Cardiac septum (tissue), 1 donor: ENCODE measurements at regions of chr9 and their contacts with region 1.

Region 1: DNA sequence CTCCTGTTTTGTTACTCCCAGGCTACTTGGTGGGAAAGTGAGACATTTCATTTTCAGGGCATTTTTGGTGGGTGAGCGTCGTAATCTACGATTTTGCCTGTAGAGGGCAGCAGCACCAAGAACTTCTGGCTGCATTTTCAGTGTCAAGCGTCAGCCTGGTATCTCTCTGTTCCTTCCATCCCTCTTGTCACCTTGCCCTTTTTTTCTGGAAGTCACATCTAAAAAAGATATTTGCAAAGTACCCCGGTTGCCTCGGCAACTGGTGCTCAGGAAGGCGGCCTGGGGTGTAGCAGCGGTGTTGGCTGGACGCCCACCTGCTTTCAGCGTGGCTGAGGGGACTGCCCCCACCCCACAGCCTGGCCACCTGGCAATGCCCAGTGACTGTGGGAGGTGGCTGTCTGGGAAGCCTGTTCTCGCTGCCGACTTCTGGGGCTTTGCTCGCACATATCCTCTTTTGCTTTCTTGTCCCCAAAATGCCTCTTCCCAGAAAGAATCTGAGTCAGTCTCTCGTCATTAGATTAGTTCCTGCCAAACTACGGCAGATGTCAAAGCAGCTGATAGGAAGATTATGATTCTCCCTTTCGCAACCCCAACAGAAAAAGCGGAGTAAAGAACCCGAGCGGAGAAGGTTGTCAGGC is 84.5 kb downstream of the ACER2 start:
- DNase-seq: peak; percentile 82

Region 2: DNA sequence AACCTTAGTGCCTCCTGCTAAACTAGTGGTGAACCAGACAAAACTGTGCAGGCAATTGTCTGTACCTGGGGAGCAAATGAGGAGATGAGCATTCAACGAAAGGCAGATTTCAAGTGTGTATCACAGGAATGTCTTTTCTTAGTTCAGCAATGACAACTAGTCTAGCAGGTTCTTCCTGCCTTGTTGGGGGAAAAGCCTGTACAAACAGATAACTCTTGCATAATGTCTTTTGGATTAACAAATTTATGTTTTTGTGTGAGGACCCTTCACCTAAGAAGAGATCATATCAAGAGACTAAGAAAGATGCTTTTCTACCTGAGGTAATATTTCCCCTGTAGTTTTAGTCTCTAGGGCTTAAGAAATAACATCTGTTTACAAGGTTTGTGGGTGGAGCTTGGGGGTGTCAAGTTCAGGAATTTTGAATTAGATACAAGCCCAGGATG is 284.6 kb before region 1 on chr9:
- intact Hi-C with region 1: no loop called
- DNase-seq: no peak

Region 3: DNA sequence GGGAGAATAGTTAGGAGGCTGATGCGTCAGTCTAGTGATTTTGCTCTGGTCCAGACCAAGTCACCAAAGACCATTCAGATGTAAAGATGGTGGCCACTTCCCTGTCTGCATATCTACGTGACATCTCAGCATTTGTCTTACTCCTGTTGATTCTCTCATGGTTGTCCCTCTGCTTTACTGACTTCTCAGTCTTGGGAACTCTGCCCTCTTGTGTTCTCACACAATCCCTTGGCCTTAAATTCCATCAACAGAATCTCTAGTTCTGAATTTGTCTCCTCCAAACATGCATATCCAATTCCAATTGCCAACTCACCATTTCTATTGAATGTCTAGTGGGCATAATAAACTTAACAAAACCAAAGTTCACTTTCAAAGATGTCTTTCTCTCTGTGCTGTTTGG is 147.8 kb after region 1 on chr9:
- intact Hi-C with region 1: loop called (anchors 10 kb)
- DNase-seq: no peak

Region 4: GRCh38 chr9:20570756-20571155 is 1077.5 kb after region 1 on chr9:
- intact Hi-C with region 1: no loop called
- DNase-seq: no peak